ENCODE measurements at regions of chr2 and their contacts with region 1.

Region 1: DNA sequence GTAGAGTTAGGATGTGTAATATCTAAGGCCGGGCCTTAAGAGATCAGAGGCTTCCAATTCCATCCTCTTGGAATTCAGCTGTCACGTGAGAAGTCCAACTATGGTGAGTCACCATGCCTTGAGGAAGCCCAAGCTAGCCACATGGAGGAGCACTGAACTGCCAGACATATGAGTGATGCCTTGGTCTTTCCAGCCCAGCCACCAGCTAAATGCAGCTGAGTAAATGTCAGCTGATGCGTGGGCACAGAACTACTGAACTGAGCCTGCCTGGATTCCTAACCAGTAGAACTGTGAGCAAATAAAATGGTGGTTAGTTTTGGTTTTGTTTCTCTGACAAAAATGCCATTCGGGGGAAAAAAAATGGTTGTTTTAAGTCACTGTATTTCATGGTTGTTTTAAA is 153.7 kb upstream of the SERTAD2 start:
- DNase-seq: peak; percentile 98
- H3K4me3 ChIP-seq: no peak overlapping the region
- H3K27ac ChIP-seq: peak overlapping the region; percentile 63
- H3K4me1 ChIP-seq: peaks cover 19% of the 10 kb centered on the region
- H3K27me3 ChIP-seq: no peaks in the 10 kb centered on the region
- CTCF ChIP-seq: peak; percentile 19 to 43

Region 2: GRCh38 chr2:64653349-64654062 is 153.9 kb before region 1 on chr2 and contains the start of gene SERTAD2:
- CTCF ChIA-PET with region 1: no interaction called
- dilution Hi-C with region 1: no loop called
- in situ Hi-C with region 1: no loop called
- intact Hi-C with region 1: loop called (anchors 1 kb)
- DNase-seq: peak; percentile 83
- H3K4me3 ChIP-seq: peak within 1 kb of the TSS; percentile 91 to 94 (median 92)
- H3K27ac ChIP-seq: peak within 1 kb of the TSS; percentile 82
- H3K4me1 ChIP-seq: peaks cover 39% of the 10 kb centered on the region
- H3K27me3 ChIP-seq: no peaks in the 10 kb centered on the region
- CTCF ChIP-seq: peak in 1 of 2 donors; percentile 22
- total RNA-seq, gene SERTAD2: 16.0 to 24.2 TPM

Region 3: GRCh38 chr2:64685438-64685837 is 122.0 kb before region 1 on chr2:
- CTCF ChIA-PET with region 1: no interaction called
- dilution Hi-C with region 1: no loop called
- in situ Hi-C with region 1: no loop called
- intact Hi-C with region 1: no loop called
- DNase-seq: no peak
- H3K4me3 ChIP-seq: no peak overlapping the region
- H3K27ac ChIP-seq: no peak overlapping the region
- H3K4me1 ChIP-seq: peaks cover 8% of the 10 kb centered on the region
- H3K27me3 ChIP-seq: no peaks in the 10 kb centered on the region
- CTCF ChIP-seq: no peak

Region 4: GRCh38 chr2:64730551-64731262 is 76.7 kb before region 1 on chr2:
- CTCF ChIA-PET with region 1: no interaction called
- dilution Hi-C with region 1: no loop called
- in situ Hi-C with region 1: no loop called
- intact Hi-C with region 1: no loop called
- DNase-seq: peak; percentile 74
- H3K4me3 ChIP-seq: peak overlapping the region; percentile 22 to 35 (median 26)
- H3K27ac ChIP-seq: peak overlapping the region; percentile 31
- H3K4me1 ChIP-seq: peaks cover 14% of the 10 kb centered on the region
- H3K27me3 ChIP-seq: no peaks in the 10 kb centered on the region
- CTCF ChIP-seq: no peak

Region 5: GRCh38 chr2:64767670-64768468 is 39.5 kb before region 1 on chr2:
- CTCF ChIA-PET with region 1: no interaction called
- dilution Hi-C with region 1: loop called (anchors 5 kb)
- in situ Hi-C with region 1: no loop called
- intact Hi-C with region 1: no loop called
- DNase-seq: peak; percentile 86
- H3K4me3 ChIP-seq: peak overlapping the region; percentile 57 to 75 (median 67)
- H3K27ac ChIP-seq: peak overlapping the region; percentile 86
- H3K4me1 ChIP-seq: peaks cover 28% of the 10 kb centered on the region
- H3K27me3 ChIP-seq: no peaks in the 10 kb centered on the region
- CTCF ChIP-seq: peak in 1 of 2 donors; percentile 0

Region 6: DNA sequence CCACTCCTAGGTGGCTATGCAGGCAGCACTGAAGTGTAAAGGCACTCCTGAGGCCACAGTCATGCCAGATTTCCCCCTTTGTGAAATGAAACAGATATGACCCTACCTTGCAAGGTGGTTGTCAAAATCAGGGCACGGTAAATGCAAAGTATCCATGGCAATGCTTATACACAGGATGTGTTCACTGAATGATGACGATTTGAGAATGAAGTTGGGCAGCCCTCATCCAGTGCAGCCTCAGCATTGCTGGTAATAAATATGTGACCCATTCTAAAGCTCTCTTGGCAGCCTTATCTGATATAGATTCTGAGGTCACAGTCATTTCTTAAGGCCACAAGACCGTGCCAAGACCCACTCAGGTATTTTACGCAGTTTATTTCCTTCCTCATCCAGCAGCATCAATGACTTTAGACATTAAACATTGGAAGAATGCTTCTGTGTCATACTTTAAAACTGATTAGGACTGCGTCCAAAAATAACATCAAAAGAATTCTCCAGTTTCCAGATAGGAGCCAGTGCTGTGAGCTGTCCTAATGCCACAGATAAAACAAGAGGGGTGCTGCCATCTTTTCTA is 28.2 kb before region 1 on chr2:
- CTCF ChIA-PET with region 1: no interaction called
- dilution Hi-C with region 1: no loop called
- in situ Hi-C with region 1: no loop called
- intact Hi-C with region 1: loop called (anchors 2 kb)
- DNase-seq: peak; percentile 66
- H3K4me3 ChIP-seq: no peak overlapping the region
- H3K27ac ChIP-seq: no peak overlapping the region
- H3K4me1 ChIP-seq: peaks cover 12% of the 10 kb centered on the region
- H3K27me3 ChIP-seq: no peaks in the 10 kb centered on the region
- CTCF ChIP-seq: no peak

Region 7: GRCh38 chr2:64831134-64831976 is 23.9 kb after region 1 on chr2:
- CTCF ChIA-PET with region 1: no interaction called
- dilution Hi-C with region 1: no loop called
- in situ Hi-C with region 1: no loop called
- intact Hi-C with region 1: loop called (anchors 1 kb)
- DNase-seq: peak; percentile 98
- H3K4me3 ChIP-seq: no peak overlapping the region
- H3K27ac ChIP-seq: peak overlapping the region; percentile 59
- H3K4me1 ChIP-seq: peaks cover 25% of the 10 kb centered on the region
- H3K27me3 ChIP-seq: no peaks in the 10 kb centered on the region
- CTCF ChIP-seq: peak; percentile 78 to 97

Region 8: GRCh38 chr2:64839844-64840243 is 32.4 kb after region 1 on chr2:
- CTCF ChIA-PET with region 1: no interaction called
- dilution Hi-C with region 1: no loop called
- in situ Hi-C with region 1: no loop called
- intact Hi-C with region 1: loop called (anchors 1 kb)
- DNase-seq: no peak
- H3K4me3 ChIP-seq: no peak overlapping the region
- H3K27ac ChIP-seq: peak overlapping the region; percentile 66
- H3K4me1 ChIP-seq: peaks cover 37% of the 10 kb centered on the region
- H3K27me3 ChIP-seq: no peaks in the 10 kb centered on the region
- CTCF ChIP-seq: no peak

Region 9: DNA sequence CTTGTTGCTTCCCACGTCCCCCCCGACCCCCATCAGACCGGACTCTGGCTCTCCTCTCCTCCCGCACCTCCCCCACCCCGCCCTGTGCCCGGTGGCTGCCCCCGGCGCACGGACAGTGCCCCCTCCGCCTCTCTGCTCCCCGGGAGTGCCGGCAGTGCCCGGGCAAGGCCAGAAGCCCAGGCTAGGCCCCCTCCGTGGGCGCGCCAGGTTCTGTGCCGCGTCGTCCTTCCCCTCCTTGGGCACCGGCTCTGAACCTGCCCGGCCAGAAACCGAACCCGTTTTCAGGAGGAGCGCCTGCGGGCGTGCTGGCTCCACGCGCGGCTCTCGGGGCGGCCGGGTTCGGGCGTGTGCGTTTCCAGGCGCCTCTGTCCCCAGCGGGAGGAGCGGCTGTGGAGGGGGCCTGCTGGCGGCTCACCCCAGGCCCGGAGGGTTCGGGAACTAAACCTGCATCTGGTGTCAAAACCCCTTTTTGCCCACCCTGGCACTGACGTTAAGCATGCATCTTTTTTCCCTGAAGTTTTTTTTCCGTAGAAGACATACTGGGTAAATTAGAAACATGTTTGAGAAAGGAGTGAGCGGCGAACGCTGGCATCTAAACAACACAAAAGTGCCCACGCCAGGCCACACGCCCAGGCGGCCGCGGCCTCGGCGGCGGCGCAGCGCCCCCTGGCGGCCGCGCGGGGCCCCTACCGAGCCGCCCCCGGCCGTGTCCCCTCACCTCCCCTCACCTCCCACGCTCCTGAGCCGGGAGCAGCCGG is 57.8 kb after region 1 on chr2:
- CTCF ChIA-PET with region 1: no interaction called
- dilution Hi-C with region 1: no loop called
- in situ Hi-C with region 1: no loop called
- intact Hi-C with region 1: loop called (anchors 1 kb)
- DNase-seq: peak; percentile 45
- H3K4me3 ChIP-seq: peak overlapping the region; percentile 41 to 50 (median 48)
- H3K27ac ChIP-seq: peak overlapping the region; percentile 45
- H3K4me1 ChIP-seq: peaks cover 22% of the 10 kb centered on the region
- H3K27me3 ChIP-seq: no peaks in the 10 kb centered on the region
- CTCF ChIP-seq: peak; percentile 37 to 50

Measured in mammary epithelial cell (primary cell).